Posterior vena cava (tissue), 2 donors: ENCODE measurements at regions of chr16 and their contacts with region 1.

Region 1: GRCh38 chr16:87550496-87550961 is 51.8 kb upstream of the JPH3 start:
- DNase-seq: no peak

Region 2: DNA sequence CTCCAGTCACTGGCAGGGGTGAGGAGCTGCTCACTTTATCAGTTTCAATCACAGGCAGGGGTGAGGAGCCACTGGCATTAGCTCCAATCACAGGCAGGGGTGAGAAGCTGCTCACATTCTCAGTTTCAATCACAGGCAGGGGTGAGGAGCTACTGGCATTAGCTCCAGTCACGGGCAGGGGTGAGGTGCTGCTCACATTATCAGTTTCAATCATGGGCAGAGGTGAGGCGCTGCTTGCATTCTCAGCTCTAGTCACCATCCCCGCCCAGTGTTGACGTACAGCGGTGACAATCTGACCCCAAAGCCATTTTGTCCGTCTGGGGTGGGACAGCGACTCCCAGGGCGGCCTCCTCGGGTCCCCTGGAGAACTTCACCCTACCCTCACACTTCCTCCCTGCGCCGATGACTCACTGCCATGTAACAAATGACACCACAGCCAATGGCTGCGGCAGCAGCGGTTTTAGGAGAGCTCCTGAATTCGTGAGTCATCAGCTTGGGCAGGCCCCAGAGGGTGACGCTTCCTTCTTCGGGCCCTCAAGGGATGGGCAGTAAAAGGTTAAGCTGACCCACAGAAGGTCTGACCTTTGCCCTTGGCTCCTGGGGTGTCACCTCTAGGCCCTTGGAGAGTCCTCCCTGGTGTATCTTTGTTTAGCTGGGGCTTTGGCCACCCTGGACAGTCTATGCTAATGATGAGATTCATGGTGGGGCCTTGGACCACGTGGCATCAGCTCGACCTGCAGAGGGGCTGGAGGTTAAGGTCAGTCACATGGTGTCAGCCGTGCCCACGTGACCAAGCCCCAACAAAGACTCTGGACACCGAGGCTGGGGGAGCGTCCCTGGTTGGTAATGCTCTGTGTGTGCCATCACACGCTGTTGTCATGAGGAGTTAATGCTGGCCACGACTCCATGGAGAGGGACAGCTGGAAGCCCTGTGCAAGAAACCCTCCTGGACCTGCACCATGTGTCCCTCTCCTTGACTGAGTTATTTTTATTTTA is 405.1 kb before region 1 on chr16:
- intact Hi-C with region 1: no loop called
- DNase-seq: peak; percentile 80

Region 3: GRCh38 chr16:87332150-87332549 is 218.4 kb before region 1 on chr16:
- intact Hi-C with region 1: no loop called
- DNase-seq: no peak

Region 4: DNA sequence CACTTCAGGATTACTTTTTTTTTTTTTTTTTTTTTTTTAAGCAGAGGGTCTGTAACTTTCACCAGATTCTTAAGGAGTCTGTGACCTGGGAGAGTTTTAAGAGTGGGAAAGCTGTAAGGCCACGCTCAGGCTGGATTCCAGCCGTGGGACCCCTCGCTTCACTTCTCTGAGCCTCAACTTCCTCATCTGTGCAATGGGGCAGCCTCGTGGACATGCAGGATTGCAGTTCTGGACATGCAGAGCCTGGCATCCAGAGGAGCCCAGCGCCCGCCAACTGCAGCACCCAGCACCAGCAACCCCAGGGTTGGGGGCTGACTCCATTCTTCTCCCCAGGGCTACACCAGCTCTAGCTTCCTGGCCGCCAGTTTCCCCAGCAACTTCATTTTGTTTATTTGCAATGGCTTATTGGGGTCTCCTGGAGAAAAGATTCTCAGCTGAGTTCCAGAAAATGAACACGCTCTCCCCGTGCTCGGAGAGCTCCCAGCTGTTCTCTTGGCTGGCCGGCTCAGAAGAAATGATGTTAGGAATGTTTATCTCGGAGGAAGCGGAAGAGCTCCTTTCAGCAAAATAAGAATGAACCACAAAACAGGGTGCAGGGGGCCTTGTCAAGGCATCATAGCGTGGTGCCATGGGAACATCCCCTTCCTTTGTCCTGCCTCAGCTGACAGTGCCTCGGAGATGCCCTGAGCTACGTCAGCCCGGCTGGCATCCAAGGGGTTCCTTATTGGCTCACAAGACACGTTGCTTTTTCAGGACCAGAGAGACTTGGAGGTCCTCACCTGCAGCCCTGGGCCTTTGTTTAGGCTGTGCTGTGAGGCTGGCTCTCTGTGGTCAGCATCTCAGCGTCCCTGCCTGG is 34.8 kb before region 1 on chr16:
- intact Hi-C with region 1: loop called in 1 of 2 experiments (anchors 1 kb)
- DNase-seq: no peak

Region 5: DNA sequence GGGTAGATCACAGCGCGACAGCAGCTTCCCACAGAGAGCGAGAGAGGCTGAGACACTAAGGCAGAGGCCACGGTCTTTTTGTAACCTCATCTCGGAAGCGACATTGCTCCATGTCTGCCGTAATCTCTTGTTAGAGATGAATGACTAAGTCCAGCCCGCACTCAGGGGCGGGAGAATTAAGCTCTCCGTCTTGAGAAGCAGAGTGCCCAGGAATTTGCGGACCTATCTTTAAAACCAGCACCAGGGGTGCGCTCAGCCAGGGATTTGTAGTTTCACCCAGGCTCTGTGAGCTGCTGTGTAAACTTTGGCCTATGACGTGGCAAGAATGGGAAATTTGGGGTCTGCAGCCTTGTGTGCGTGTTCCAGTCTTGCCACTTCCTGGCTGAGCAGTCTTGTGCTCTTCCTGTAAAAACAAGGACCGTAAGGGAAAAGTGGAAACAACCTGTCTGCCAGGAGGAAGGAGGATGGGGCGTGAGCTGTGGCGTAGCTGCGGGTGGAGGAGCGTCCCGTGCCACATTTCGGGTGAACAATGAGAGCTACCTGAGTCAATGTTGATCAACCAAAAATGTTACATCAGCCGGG is 35.8 kb after region 1 on chr16:
- intact Hi-C with region 1: loop called in 1 of 2 experiments (anchors 1 kb)
- DNase-seq: no peak